Activated T-helper 2 cell treated with anti-CD3 and anti-CD28 coated beads, Interferon-gamma antibody, Interleukin-2, Interleukin-4, amounts not matched to agents 10 μg/mL and 5 μg/mL and 100 μg/mL, durations not matched to agents 14 hours and 24 hours and 36 hours (primary cell): ENCODE measurements at regions of chr3 and their contacts with region 1.

Region 1: GRCh38 chr3:141498598-141499223 is 11.9 kb downstream of the RASA2 start:
- DNase-seq: peak; percentile 90
- H3K4me3 Mint-ChIP-seq: peak overlapping the region; percentile 43
- H3K27ac Mint-ChIP-seq: peak overlapping the region; percentile 82
- H3K4me1 Mint-ChIP-seq: peaks cover 66% of the 10 kb centered on the region
- H3K27me3 Mint-ChIP-seq: no peaks in the 10 kb centered on the region

Region 2: GRCh38 chr3:141237701-141238521 is 260.8 kb before region 1 on chr3:
- intact Hi-C with region 1: no loop called
- DNase-seq: no peak
- H3K4me3 Mint-ChIP-seq: peak overlapping the region; percentile 43
- H3K27ac Mint-ChIP-seq: peak overlapping the region; percentile 82
- H3K4me1 Mint-ChIP-seq: peaks cover 84% of the 10 kb centered on the region
- H3K27me3 Mint-ChIP-seq: no peaks in the 10 kb centered on the region

Region 3: GRCh38 chr3:141487521-141488252 is 11.0 kb before region 1 on chr3:
- intact Hi-C with region 1: loop called (anchors 1 kb)
- DNase-seq: peak; percentile 86
- H3K4me3 Mint-ChIP-seq: peak overlapping the region; percentile 91
- H3K27ac Mint-ChIP-seq: peak overlapping the region; percentile 95
- H3K4me1 Mint-ChIP-seq: peaks cover 56% of the 10 kb centered on the region
- H3K27me3 Mint-ChIP-seq: no peaks in the 10 kb centered on the region

Region 4: GRCh38 chr3:141514382-141514781 is 15.7 kb after region 1 on chr3:
- intact Hi-C with region 1: loop called (anchors 1 kb)
- DNase-seq: no peak
- H3K4me3 Mint-ChIP-seq: no peak overlapping the region
- H3K27ac Mint-ChIP-seq: peak overlapping the region; percentile 39
- H3K4me1 Mint-ChIP-seq: peaks cover 28% of the 10 kb centered on the region
- H3K27me3 Mint-ChIP-seq: no peaks in the 10 kb centered on the region

Region 5: GRCh38 chr3:141530133-141530768 is 31.5 kb after region 1 on chr3:
- intact Hi-C with region 1: loop called (anchors 1 kb)
- DNase-seq: no peak
- H3K4me3 Mint-ChIP-seq: no peak overlapping the region
- H3K27ac Mint-ChIP-seq: peak overlapping the region; percentile 44
- H3K4me1 Mint-ChIP-seq: peaks cover 34% of the 10 kb centered on the region
- H3K27me3 Mint-ChIP-seq: no peaks in the 10 kb centered on the region

Region 6: DNA sequence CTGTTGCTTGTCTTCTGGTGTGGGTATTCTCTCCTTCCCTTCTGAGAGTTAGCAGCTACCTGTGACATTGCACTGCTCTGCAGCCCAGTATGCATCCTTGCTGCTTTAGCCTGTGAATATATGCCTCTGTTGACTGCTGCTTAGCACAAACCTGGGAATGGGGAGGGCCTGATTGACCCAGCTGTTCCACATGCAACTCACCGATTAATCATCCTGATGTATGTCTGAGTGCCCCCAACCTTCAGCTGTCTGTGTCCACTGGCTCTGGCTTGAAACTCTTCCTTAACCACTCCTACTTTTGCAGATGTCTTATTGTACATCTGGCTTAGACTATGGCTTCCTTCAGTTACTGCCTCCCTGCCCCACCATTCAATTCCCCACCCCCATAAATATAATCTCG is 107.2 kb after region 1 on chr3:
- intact Hi-C with region 1: no loop called
- DNase-seq: no peak
- H3K4me3 Mint-ChIP-seq: no peak overlapping the region
- H3K27ac Mint-ChIP-seq: no peak overlapping the region
- H3K4me1 Mint-ChIP-seq: no peaks in the 10 kb centered on the region
- H3K27me3 Mint-ChIP-seq: no peaks in the 10 kb centered on the region